ENCODE measurements at regions of chr20 and their contacts with region 1.

Region 1: GRCh38 chr20:52242237-52243230 is 51.0 kb upstream of the ZFP64 start:
- DNase-seq: no peak
- H3K4me3 Mint-ChIP-seq: no peak overlapping the region
- H3K27ac Mint-ChIP-seq: no peak overlapping the region
- H3K4me1 Mint-ChIP-seq: no peaks in the 10 kb centered on the region
- H3K27me3 Mint-ChIP-seq: peaks cover 12% of the 10 kb centered on the region

Region 2: GRCh38 chr20:51978081-51978501 is 264.4 kb before region 1 on chr20:
- intact Hi-C with region 1: no loop called
- DNase-seq: no peak
- H3K4me3 Mint-ChIP-seq: no peak overlapping the region
- H3K27ac Mint-ChIP-seq: no peak overlapping the region
- H3K4me1 Mint-ChIP-seq: no peaks in the 10 kb centered on the region
- H3K27me3 Mint-ChIP-seq: peaks cover 2% of the 10 kb centered on the region

Region 3: DNA sequence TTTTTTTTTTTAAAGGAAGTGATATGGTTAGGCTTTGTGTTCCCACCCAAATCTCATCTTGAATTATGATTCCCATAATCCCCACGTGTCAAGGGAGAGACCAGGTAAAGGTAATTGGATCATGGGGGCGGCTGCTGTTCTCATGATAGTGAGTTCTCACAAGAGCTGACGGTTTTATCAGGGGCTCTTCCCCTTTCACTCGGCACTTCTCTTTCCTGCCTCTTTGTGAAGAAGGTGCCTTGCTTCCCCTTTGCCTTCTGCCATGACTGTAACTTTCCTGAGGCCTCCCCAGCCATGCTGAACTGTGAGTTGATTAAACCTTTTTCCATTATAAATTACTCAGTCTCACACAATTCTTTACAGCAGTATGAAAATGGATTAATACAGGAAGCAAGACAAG is 115.2 kb before region 1 on chr20:
- intact Hi-C with region 1: loop called (anchors 1 kb)
- DNase-seq: no peak
- H3K4me3 Mint-ChIP-seq: no peak overlapping the region
- H3K27ac Mint-ChIP-seq: no peak overlapping the region
- H3K4me1 Mint-ChIP-seq: peaks cover 8% of the 10 kb centered on the region
- H3K27me3 Mint-ChIP-seq: peaks cover 2% of the 10 kb centered on the region

Region 4: DNA sequence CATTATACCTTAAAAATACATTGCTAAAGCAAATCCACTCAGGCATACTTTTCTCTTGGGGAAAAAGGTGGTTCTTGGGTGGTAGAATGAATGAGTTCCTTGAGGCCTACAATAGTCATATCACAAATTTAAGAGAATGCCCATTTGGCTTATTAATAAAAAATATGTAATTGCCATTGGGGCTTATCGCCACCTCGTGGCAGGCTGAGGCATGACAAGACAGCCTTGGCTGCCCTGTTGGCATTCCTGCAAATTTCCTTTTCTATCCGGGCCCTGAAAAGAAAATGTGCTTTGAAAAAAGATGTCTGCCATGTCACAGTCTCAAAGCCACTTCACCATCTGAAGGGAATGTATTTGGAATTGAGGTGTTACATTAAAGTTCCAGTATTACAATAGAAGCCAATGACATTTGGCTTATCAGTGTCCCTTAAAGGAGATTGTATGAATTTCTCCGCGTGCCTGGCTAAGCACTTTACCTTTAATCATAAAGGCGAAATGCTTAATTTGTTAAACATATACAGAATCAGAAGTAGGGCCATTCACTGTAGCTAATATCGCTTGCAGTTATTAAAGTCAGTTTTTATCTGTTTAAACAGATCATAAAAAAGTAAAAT is 137.3 kb after region 1 on chr20:
- intact Hi-C with region 1: loop called (anchors 1 kb)
- DNase-seq: no peak
- H3K4me3 Mint-ChIP-seq: no peak overlapping the region
- H3K27ac Mint-ChIP-seq: no peak overlapping the region
- H3K4me1 Mint-ChIP-seq: no peaks in the 10 kb centered on the region
- H3K27me3 Mint-ChIP-seq: peaks cover 2% of the 10 kb centered on the region

Region 5: DNA sequence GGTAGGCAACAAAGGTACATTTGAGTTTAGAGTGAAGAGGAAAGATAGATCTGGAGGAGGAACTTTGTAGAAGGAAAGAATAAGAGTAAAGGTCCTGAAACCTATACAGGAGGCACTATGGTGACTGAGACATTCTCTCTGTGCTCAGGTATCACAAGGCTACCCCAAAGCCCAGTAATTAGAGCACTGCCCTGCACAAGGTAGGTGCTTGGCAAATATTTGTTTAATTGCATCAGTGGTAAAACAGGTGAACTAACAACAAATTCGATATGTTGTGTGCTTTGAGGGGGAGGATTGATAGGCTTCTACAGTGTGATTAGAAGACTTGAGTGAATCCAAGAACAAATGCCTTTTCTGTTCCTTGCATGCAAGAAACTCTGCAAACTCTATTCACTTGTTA is 722.8 kb after region 1 on chr20:
- intact Hi-C with region 1: loop called (anchors 10 kb)
- DNase-seq: no peak
- H3K4me3 Mint-ChIP-seq: no peak overlapping the region
- H3K27ac Mint-ChIP-seq: no peak overlapping the region
- H3K4me1 Mint-ChIP-seq: peaks cover 5% of the 10 kb centered on the region
- H3K27me3 Mint-ChIP-seq: no peaks in the 10 kb centered on the region

Region 6: GRCh38 chr20:53032478-53032932 is 790.0 kb after region 1 on chr20:
- intact Hi-C with region 1: loop called (anchors 5 kb)
- DNase-seq: no peak
- H3K4me3 Mint-ChIP-seq: no peak overlapping the region
- H3K27ac Mint-ChIP-seq: no peak overlapping the region
- H3K4me1 Mint-ChIP-seq: peaks cover 63% of the 10 kb centered on the region
- H3K27me3 Mint-ChIP-seq: no peaks in the 10 kb centered on the region

Region 7: GRCh38 chr20:53547664-53548239 is 1305.2 kb after region 1 on chr20:
- intact Hi-C with region 1: loop called (anchors 1 kb)
- DNase-seq: peak; percentile 24
- H3K4me3 Mint-ChIP-seq: no peak overlapping the region
- H3K27ac Mint-ChIP-seq: no peak overlapping the region
- H3K4me1 Mint-ChIP-seq: no peaks in the 10 kb centered on the region
- H3K27me3 Mint-ChIP-seq: no peaks in the 10 kb centered on the region